SK-N-SH (cell line): ENCODE measurements at regions of chrX and their contacts with region 1.

Region 1: GRCh38 chrX:19739683-19740082 is 147.7 kb downstream of the SH3KBP1 start:
- DNase-seq: peak; percentile 64
- H3K4me3 ChIP-seq: no peak overlapping the region
- H3K27ac ChIP-seq: peak overlapping the region in 1 of 2 experiments; percentile 19; a peak in 1 of 4 replicates
- H3K4me1 ChIP-seq: peaks cover 0 to 6% of the 10 kb centered on the region in 2 experiments; a peak in 1 of 4 replicates
- H3K27me3 ChIP-seq: no peaks in the 10 kb centered on the region
- CTCF ChIP-seq: peak; percentile 84
- EP300 ChIP-seq: no peak
- RAD21 ChIP-seq: peak; percentile 77

Region 2: DNA sequence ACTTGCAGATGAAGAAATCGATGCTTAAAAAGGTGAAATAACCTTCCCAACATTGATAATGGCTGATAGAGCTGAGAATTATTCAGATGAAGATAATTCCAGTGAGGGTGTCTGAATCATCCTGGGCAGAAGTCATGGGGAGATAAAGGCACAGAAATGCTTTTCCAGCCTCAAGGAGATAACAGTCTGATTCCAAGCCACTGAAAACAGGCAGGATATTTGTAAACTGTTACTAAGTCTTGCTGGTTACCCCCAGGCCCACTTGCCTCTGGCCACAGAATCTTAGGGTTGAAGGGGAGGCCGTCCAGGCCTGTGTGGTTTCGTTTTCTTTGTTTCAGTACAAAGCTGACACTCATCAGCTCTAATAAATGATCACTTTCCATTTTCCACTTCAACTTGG is 10.8 kb before region 1 on chrX:
- CTCF ChIA-PET with region 1: interaction called, 11 read pairs
- POLR2A ChIA-PET with region 1: no interaction called
- DNase-seq: no peak
- H3K4me3 ChIP-seq: no peak overlapping the region
- H3K27ac ChIP-seq: no peak overlapping the region
- H3K4me1 ChIP-seq: no peaks in the 10 kb centered on the region; a peak in 1 of 4 replicates
- H3K27me3 ChIP-seq: no peaks in the 10 kb centered on the region
- CTCF ChIP-seq: no peak
- EP300 ChIP-seq: no peak
- RAD21 ChIP-seq: no peak

Region 3: GRCh38 chrX:19920970-19921369 is 181.3 kb after region 1 on chrX:
- CTCF ChIA-PET with region 1: no interaction called
- POLR2A ChIA-PET with region 1: no interaction called
- DNase-seq: no peak
- H3K4me3 ChIP-seq: no peak overlapping the region
- H3K27ac ChIP-seq: no peak overlapping the region
- H3K4me1 ChIP-seq: no peaks in the 10 kb centered on the region
- H3K27me3 ChIP-seq: no peaks in the 10 kb centered on the region; the same call in 1 of the 2 replicates
- CTCF ChIP-seq: no peak
- EP300 ChIP-seq: no peak
- RAD21 ChIP-seq: no peak